ENCODE measurements at regions of chr20 and their contacts with region 1.

Region 1: DNA sequence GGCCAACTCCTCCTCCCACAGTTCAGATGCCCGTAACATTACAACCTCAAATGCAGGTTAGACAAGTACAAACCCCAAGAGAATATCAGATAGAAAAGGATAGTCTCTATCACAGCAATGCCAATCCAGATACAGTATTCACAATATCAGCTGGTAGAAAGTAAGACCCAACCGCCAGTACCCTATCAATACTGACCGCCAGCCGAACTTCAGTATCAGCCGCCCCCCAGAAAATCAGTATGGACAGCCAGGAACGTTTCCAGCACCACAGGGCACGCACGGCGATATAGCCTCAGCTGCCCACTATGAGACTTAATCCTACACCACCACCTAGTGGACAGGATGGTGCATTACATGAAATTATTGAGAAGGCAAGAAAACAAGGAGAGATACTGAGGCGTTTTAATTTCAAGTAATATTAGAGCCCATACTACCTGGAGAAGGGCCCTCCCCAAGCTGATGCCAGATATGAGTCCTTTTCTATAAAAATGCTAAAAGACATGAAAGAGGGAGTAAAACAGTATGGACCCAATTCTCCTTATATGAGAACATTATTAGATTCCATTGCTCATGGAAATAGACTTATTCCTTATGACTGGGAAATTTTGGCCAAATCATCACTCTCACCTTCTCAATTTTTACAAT is 17.6 kb upstream of the EIF2S2 start:
- DNase-seq: peak; percentile 83
- H3K4me3 ChIP-seq: peak overlapping the region; percentile 30
- H3K27ac ChIP-seq: no peak overlapping the region
- H3K4me1 ChIP-seq: no peaks in the 10 kb centered on the region
- H3K27me3 ChIP-seq: no peaks in the 10 kb centered on the region
- CTCF ChIP-seq: peak; percentile 87

Region 2: GRCh38 chr20:33666293-33667244 is 463.1 kb before region 1 on chr20 and contains the start of gene ACTL10:
- CTCF ChIA-PET with region 1: no interaction called
- POLR2A ChIA-PET with region 1: no interaction called
- intact Hi-C with region 1: loop called (anchors 5 kb)
- DNase-seq: peak; percentile 80
- H3K4me3 ChIP-seq: peak within 1 kb of the TSS; percentile 48
- H3K27ac ChIP-seq: peak within 1 kb of the TSS; percentile 29
- H3K4me1 ChIP-seq: peaks cover 34% of the 10 kb centered on the region
- H3K27me3 ChIP-seq: no peaks in the 10 kb centered on the region
- CTCF ChIP-seq: no peak
- total RNA-seq, gene ACTL10: 0.39 and 0.47 TPM in 2 replicates

Region 3: GRCh38 chr20:33791959-33792597 is 337.6 kb before region 1 on chr20:
- CTCF ChIA-PET with region 1: interaction called, 3 read pairs
- POLR2A ChIA-PET with region 1: no interaction called
- intact Hi-C with region 1: loop called (anchors 10 kb)
- DNase-seq: peak; percentile 69
- H3K4me3 ChIP-seq: no peak overlapping the region
- H3K27ac ChIP-seq: no peak overlapping the region
- H3K4me1 ChIP-seq: no peaks in the 10 kb centered on the region
- H3K27me3 ChIP-seq: no peaks in the 10 kb centered on the region
- CTCF ChIP-seq: peak; percentile 84

Region 4: GRCh38 chr20:33862709-33863403 is 266.8 kb before region 1 on chr20:
- CTCF ChIA-PET with region 1: interaction called, 8 read pairs
- POLR2A ChIA-PET with region 1: no interaction called
- intact Hi-C with region 1: loop called (anchors 1 kb)
- DNase-seq: peak; percentile 78
- H3K4me3 ChIP-seq: peak overlapping the region; percentile 38
- H3K27ac ChIP-seq: peak overlapping the region; percentile 52
- H3K4me1 ChIP-seq: peaks cover 6% of the 10 kb centered on the region
- H3K27me3 ChIP-seq: no peaks in the 10 kb centered on the region
- CTCF ChIP-seq: peak; percentile 95

Region 5: GRCh38 chr20:33933469-33933909 is 196.2 kb before region 1 on chr20:
- CTCF ChIA-PET with region 1: no interaction called
- POLR2A ChIA-PET with region 1: no interaction called
- intact Hi-C with region 1: loop called (anchors 5 kb)
- DNase-seq: peak; percentile 80
- H3K4me3 ChIP-seq: no peak overlapping the region
- H3K27ac ChIP-seq: no peak overlapping the region
- H3K4me1 ChIP-seq: no peaks in the 10 kb centered on the region
- H3K27me3 ChIP-seq: no peaks in the 10 kb centered on the region
- CTCF ChIP-seq: peak; percentile 70

Measured in A673 (cell line).